PC-9 (cell line): ENCODE measurements at regions of chr2 and their contacts with region 1.

Region 1: GRCh38 chr2:98835831-98836385 is 100.1 kb downstream of the CRACDL start:
- DNase-seq: no peak
- H3K4me3 ChIP-seq: no peak overlapping the region
- H3K27ac ChIP-seq: no peak overlapping the region
- H3K4me1 ChIP-seq: peaks cover 25% of the 10 kb centered on the region
- H3K27me3 ChIP-seq: no peaks in the 10 kb centered on the region
- CTCF ChIP-seq: no peak

Region 2: DNA sequence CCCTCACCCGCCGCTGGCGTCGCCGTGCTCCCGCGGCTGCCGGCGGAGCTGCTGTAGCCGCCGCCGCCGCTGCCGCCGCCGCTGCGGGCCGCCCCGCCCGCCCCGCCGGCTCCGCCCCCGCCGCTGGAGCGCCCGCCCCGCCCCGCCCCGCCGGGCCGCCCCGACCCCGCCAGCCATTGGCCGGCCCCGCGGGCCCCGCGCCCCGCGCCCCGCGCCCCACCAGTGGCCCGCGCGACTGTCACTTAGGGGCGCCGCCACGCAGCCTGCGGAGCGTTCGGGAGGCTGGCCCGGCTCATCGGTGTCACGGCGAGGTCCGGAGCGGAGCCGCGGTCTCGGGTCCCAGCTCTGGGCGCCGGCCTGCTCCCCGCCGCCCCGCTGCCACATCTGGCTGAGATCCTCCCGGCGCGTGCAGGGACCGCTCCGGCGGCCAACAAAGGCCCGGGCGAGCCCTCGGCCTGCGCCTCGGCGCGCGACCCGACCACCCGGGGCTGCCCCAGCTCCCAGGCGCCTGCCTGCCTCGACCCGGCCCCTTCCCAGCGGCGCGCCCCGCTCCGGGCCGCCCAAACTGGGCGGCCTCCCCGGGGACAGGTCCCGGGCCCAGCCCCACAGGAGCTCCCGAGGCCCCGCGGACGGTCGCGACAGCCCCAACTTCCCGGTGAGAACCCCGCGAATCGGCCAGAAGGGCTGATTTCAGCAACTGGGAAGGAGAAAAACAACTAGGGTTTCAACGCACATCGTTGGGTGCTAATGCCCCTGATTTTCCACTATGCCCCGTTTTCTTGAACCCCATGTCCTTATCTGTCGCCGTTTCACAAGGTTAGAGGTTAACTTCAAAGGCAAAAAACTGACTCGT is 104.6 kb before region 1 on chr2 and contains the start of gene MGAT4A:
- CTCF ChIA-PET with region 1: interaction called, 12 read pairs
- POLR2A ChIA-PET with region 1: no interaction called
- intact Hi-C with region 1: loop called (anchors 5 kb)
- DNase-seq: peak in 1 of 2 experiments; percentile 75
- H3K4me3 ChIP-seq: peak within 1 kb of the TSS; percentile 81
- H3K27ac ChIP-seq: no peak within 1 kb of the TSS
- H3K4me1 ChIP-seq: peaks cover 34% of the 10 kb centered on the region
- H3K27me3 ChIP-seq: no peaks in the 10 kb centered on the region
- CTCF ChIP-seq: no peak
- total RNA-seq, gene MGAT4A: 12.2 and 12.9 TPM in 2 replicates